ENCODE measurements at regions of chr11 and their contacts with region 1.

Region 1: DNA sequence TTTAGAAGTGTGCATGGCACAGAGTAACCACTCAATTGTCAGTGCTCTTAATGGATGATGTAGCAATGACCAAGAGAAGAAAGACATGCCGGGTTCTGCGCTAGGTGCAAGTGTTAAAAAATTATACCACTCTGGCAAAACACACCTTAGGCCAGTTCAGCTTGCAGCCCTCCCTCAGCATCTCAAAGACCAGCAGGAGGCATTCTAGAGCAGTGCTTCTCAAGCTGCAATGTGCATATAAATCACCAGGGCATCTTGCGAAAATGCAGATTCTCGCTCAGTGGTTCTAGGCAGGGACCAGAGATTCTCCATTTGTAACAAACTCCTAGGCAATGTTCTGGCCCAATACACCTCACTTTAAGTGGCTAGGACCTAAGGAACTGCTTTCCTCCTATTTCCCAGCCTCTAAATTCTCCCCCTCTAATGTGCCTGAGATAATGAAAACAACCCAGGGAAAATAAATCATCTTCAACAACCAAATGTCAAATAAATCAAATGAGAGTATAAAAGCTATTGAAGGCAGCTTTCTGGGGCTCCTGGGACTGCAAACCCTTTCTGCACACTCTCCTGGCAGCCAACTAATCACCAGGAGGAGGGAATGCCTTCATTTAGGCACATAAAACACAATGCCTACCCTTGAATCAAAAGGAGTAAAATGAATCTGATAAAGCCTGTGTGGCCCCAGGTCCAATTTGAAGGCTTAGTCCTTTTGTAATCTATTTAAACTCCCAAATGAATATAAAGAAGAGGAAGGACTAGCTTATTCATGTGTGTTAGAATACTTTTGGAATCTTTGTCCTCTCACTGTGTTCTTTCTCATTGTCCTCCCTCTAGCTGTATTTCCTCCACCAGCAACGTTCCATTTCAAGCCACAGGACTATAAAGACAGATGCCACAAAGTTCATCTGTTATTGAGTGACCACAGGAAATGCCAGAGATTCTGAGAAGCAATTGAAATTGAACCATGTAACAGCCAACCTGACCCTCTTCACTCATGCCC is 337.0 kb upstream of the API5 start:
- DNase-seq: no peak
- ATAC-seq: no peak
- H3K4me3 ChIP-seq: no peak overlapping the region
- H3K27ac ChIP-seq: no peak overlapping the region
- H3K4me1 ChIP-seq: no peaks in the 10 kb centered on the region
- H3K27me3 ChIP-seq: no peaks in the 10 kb centered on the region
- CTCF ChIP-seq: no peak
- POLR2A ChIP-seq: no peak

Region 2: GRCh38 chr11:42890773-42891172 is 84.0 kb before region 1 on chr11:
- in situ Hi-C with region 1: loop called in 1 of 4 experiments (anchors 25 kb)
- intact Hi-C with region 1: no loop called
- DNase-seq: no peak
- ATAC-seq: no peak
- H3K4me3 ChIP-seq: no peak overlapping the region
- H3K27ac ChIP-seq: no peak overlapping the region
- H3K4me1 ChIP-seq: no peaks in the 10 kb centered on the region
- H3K27me3 ChIP-seq: no peaks in the 10 kb centered on the region
- CTCF ChIP-seq: no peak
- POLR2A ChIP-seq: no peak